ENCODE measurements at regions of chr4 and their contacts with region 1.

Region 1: GRCh38 chr4:107183155-107183774 is 147.2 kb upstream of the DKK2 start:
- DNase-seq: peak in 2 of 9 experiments; percentile 26 to 35
- ATAC-seq: peak; percentile 51
- H3K4me3 ChIP-seq: no peak overlapping the region
- H3K4me3 Mint-ChIP-seq: no peak overlapping the region
- H3K27ac ChIP-seq: no peak overlapping the region
- H3K27ac Mint-ChIP-seq: no peak overlapping the region
- H3K4me1 ChIP-seq: no peaks in the 10 kb centered on the region
- H3K4me1 Mint-ChIP-seq: no peaks in the 10 kb centered on the region
- H3K27me3 ChIP-seq: no peaks in the 10 kb centered on the region
- H3K27me3 Mint-ChIP-seq: peaks cover 2% of the 10 kb centered on the region
- CTCF ChIP-seq: peak; percentile 13

Region 2: GRCh38 chr4:106803083-106803482 is 380.2 kb before region 1 on chr4:
- CTCF ChIA-PET with region 1: no interaction called
- POLR2A ChIA-PET with region 1: no interaction called
- intact Hi-C with region 1: no loop called
- DNase-seq: no peak
- ATAC-seq: no peak
- H3K4me3 ChIP-seq: no peak overlapping the region
- H3K4me3 Mint-ChIP-seq: no peak overlapping the region
- H3K27ac ChIP-seq: no peak overlapping the region
- H3K27ac Mint-ChIP-seq: no peak overlapping the region
- H3K4me1 ChIP-seq: no peaks in the 10 kb centered on the region
- H3K4me1 Mint-ChIP-seq: no peaks in the 10 kb centered on the region
- H3K27me3 ChIP-seq: no peaks in the 10 kb centered on the region
- H3K27me3 Mint-ChIP-seq: no peaks in the 10 kb centered on the region
- CTCF ChIP-seq: no peak

Region 3: GRCh38 chr4:107037199-107037584 is 146.1 kb before region 1 on chr4:
- CTCF ChIA-PET with region 1: no interaction called
- POLR2A ChIA-PET with region 1: no interaction called
- intact Hi-C with region 1: loop called in 1 of 2 experiments (anchors 2 kb)
- DNase-seq: peak in 1 of 9 experiments; percentile 0
- ATAC-seq: no peak
- H3K4me3 ChIP-seq: no peak overlapping the region
- H3K4me3 Mint-ChIP-seq: peak overlapping the region; percentile 74
- H3K27ac ChIP-seq: no peak overlapping the region
- H3K27ac Mint-ChIP-seq: no peak overlapping the region
- H3K4me1 ChIP-seq: peaks cover 9% of the 10 kb centered on the region
- H3K4me1 Mint-ChIP-seq: peaks cover 15% of the 10 kb centered on the region
- H3K27me3 ChIP-seq: peaks cover 5 to 18% of the 10 kb centered on the region in 2 experiments
- H3K27me3 Mint-ChIP-seq: peaks cover 49% of the 10 kb centered on the region
- CTCF ChIP-seq: no peak

Region 4: GRCh38 chr4:107094332-107094731 is 88.9 kb before region 1 on chr4:
- CTCF ChIA-PET with region 1: no interaction called
- POLR2A ChIA-PET with region 1: no interaction called
- intact Hi-C with region 1: loop called in 1 of 2 experiments (anchors 5 kb)
- DNase-seq: peak in 3 of 9 experiments; percentile 21 to 43 (median 33)
- ATAC-seq: peak; percentile 67
- H3K4me3 ChIP-seq: no peak overlapping the region
- H3K4me3 Mint-ChIP-seq: no peak overlapping the region
- H3K27ac ChIP-seq: no peak overlapping the region
- H3K27ac Mint-ChIP-seq: no peak overlapping the region
- H3K4me1 ChIP-seq: no peaks in the 10 kb centered on the region
- H3K4me1 Mint-ChIP-seq: no peaks in the 10 kb centered on the region
- H3K27me3 ChIP-seq: no peaks in the 10 kb centered on the region
- H3K27me3 Mint-ChIP-seq: no peaks in the 10 kb centered on the region
- CTCF ChIP-seq: no peak

Measured in CD8-positive, alpha-beta T cell (primary cell).